IMR-90 (cell line): ENCODE measurements at regions of chr15 and their contacts with region 1.

Region 1: DNA sequence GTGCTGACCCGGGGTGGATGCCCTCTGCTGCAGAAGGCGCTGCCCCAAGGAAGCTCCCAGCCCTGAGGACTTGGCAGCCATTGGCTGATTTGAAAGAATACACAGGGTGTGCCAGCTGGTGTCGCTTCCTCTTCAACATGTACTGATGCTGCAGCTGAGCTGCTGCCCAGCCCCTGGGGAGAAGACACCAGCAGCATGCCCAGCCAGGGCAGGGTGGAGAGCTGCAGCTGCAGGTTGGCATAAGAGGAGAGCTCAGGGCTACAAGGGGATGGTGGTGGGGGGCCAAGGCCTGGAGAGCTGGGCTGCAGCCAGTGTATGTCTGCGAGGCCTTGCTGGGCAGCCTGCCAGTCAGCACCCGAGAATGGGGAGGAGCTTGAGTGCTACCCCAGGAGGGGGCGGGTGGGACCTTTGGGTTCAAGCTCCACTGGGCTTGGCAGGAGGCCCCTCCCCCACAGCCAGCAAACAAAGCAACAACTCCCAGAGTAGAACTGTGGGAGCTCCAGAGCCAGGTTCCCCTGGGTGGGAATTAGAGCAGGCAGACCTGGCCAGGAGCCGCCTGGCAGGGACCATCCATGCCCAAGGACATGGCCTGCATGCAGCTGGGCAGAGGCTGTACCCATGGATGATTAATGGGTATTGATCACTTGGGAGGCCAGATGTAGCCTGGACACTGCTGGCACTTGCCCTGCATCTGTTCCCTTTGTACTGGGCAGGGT is 9.2 kb upstream of the SEMA4B start:
- DNase-seq: no peak
- ATAC-seq: peak; percentile 55
- H3K4me3 ChIP-seq: no peak overlapping the region
- H3K27ac ChIP-seq: no peak overlapping the region
- H3K4me1 ChIP-seq: peaks cover 15% of the 10 kb centered on the region
- H3K27me3 ChIP-seq: no peaks in the 10 kb centered on the region
- CTCF ChIP-seq: no peak
- POLR2A ChIP-seq: no peak
- RAD21 ChIP-seq: no peak

Region 2: GRCh38 chr15:90208356-90208755 is 16.4 kb after region 1 on chr15:
- CTCF ChIA-PET with region 1: no interaction called
- POLR2A ChIA-PET with region 1: no interaction called
- dilution Hi-C with region 1: no loop called
- in situ Hi-C with region 1: no loop called
- intact Hi-C with region 1: no loop called
- DNase-seq: no peak
- ATAC-seq: no peak
- H3K4me3 ChIP-seq: no peak overlapping the region
- H3K27ac ChIP-seq: no peak overlapping the region
- H3K4me1 ChIP-seq: peaks cover 6% of the 10 kb centered on the region
- H3K27me3 ChIP-seq: no peaks in the 10 kb centered on the region
- CTCF ChIP-seq: no peak
- POLR2A ChIP-seq: no peak
- RAD21 ChIP-seq: no peak

Region 3: DNA sequence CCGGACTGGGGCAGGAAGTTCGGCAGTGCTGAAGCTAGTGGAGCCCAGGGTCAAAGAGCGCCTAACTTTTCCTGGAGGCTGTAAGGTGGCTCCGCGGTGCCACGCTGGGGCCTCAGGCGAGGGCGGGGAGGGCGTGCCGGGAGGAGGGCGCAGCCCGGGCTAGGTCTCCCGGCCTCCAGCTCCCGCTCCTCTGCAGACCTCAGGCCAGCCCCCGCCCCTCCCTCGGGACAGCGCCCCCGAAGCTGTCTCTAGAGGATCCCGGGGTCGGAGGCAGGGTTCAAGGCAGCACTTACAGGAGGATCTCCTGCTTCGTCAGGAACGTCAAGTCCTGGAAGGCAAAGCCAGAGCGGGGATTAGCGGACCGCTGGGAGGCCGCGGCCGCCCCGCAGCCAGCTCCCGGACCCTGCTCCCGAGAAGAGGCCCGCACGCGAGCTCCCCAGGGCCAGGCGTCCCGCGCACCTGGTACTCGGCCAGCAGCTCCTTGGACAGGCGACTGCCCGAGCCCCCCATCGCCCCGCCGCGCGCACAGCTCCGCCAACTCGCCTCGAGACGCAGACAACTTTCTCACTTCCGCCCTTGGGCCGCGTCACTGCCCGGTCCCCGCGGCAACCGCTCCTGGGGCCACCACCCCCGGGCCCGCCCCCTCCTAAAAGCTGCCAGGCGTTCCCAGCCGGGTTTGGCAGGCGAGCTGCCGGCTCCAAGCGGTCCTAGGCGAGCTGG is 41.6 kb after region 1 on chr15 and contains the start of gene CIB1:
- CTCF ChIA-PET with region 1: no interaction called
- POLR2A ChIA-PET with region 1: interaction called, 12 read pairs
- dilution Hi-C with region 1: no loop called
- in situ Hi-C with region 1: no loop called
- intact Hi-C with region 1: no loop called
- DNase-seq: peak; percentile 95
- ATAC-seq: peak; percentile 97
- H3K4me3 ChIP-seq: peak within 1 kb of the TSS; percentile 84
- H3K27ac ChIP-seq: peak within 1 kb of the TSS; percentile 77
- H3K4me1 ChIP-seq: peaks cover 4% of the 10 kb centered on the region
- H3K27me3 ChIP-seq: no peaks in the 10 kb centered on the region
- CTCF ChIP-seq: no peak; the same call in 1 of the 2 replicates
- POLR2A ChIP-seq: peak; percentile 85; the same call in 1 of the 2 replicates
- RAD21 ChIP-seq: peak; percentile 48; the same call in 1 of the 2 replicates
- total RNA-seq, gene CIB1: 29.4 and 31.5 TPM in 2 replicates